HEK293T (cell line): ENCODE measurements at regions of chr2 and their contacts with region 1.

Region 1: DNA sequence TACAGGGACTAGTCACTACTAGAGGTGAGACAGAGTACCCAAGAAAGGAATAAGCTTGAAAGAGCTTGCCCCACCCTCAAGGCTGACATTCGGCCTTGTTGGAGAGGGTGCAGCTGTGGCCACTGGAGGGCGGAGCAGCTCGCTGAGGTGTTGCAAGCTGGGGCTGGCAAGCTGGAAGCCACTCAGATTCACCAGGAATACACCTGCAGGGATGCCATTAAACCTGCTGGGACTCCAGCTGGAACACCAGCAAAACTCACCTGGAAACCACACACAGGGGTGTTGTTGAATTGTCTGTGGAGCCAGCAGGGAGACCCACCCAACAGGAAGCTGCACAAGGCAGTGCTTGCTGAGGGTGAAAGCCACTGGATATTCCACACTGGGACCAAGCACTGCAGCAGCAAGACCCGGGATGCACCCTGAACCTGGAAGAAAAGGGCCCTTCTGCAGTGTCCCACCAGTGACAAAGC is 26.1 kb downstream of the KCTD18 start:
- DNase-seq: peak; percentile 61

Region 2: GRCh38 chr2:199973703-199974102 is 510.1 kb before region 1 on chr2:
- CTCF ChIA-PET with region 1: interaction called, 11 read pairs
- POLR2A ChIA-PET with region 1: no interaction called
- DNase-seq: peak; percentile 37

Region 3: GRCh38 chr2:200703127-200703925 is 219.6 kb after region 1 on chr2:
- CTCF ChIA-PET with region 1: interaction called, 28 read pairs
- POLR2A ChIA-PET with region 1: no interaction called
- DNase-seq: peak; percentile 25

Region 4: DNA sequence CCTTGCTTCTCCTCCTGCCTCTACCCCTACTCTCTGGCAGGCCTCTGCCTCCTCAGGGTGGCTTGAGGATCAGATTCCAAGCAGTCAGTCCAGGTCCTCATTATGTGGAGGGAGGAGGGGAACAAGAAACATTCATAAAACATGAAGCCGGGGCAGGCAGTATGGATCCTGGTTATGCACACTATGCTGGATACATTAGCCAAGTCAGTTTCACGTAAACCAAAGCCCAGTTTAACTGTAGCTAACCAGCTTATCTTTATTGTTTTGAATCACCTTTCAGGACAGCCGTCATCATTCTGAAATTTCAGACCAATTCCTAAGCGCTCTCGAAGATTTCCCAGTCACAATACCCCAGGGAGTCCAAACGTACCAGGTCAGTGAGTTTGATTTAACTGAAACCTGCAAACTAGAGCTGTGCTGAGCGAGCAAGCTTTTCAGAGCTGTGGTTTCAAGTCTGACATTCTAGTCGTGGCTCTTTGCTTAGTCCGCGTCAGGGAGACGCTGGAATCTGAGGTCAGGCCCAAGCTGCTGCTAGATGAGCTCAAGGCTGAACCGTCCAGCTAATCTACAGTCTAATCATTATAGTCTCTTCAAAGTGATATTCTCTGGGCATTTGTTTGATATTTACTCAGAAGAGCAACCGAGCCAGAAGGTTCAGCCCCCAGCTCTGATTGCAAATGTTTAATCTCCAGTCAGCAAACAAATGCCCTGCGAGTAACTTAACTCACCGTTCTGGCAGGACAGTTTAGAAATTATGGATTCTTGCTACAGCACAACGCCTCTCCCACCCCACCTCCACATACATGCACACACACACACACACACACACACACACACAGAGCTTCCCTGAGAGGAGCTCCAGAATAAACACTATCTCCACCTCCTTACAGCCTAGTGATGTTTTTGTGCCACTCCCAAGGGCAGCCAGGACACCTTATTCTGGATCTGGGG is 264.2 kb after region 1 on chr2:
- CTCF ChIA-PET with region 1: no interaction called
- POLR2A ChIA-PET with region 1: no interaction called
- DNase-seq: peak; percentile 60